Activated CD4-positive, alpha-beta T cell treated with anti-CD3 and anti-CD28 coated beads, Interleukin-2, amount 10 ng/mL, durations not matched to agents 7 days and 5 days (primary cell): ENCODE measurements at regions of chr10 and their contacts with region 1.

Region 1: GRCh38 chr10:97196223-97197029 is 10.7 kb upstream of the SLIT1 start:
- DNase-seq: peak; percentile 71
- H3K4me3 Mint-ChIP-seq: peak overlapping the region; percentile 71
- H3K27ac Mint-ChIP-seq: no peak overlapping the region
- H3K4me1 Mint-ChIP-seq: peaks cover 22% of the 10 kb centered on the region
- H3K27me3 Mint-ChIP-seq: peaks cover 44% of the 10 kb centered on the region

Region 2: DNA sequence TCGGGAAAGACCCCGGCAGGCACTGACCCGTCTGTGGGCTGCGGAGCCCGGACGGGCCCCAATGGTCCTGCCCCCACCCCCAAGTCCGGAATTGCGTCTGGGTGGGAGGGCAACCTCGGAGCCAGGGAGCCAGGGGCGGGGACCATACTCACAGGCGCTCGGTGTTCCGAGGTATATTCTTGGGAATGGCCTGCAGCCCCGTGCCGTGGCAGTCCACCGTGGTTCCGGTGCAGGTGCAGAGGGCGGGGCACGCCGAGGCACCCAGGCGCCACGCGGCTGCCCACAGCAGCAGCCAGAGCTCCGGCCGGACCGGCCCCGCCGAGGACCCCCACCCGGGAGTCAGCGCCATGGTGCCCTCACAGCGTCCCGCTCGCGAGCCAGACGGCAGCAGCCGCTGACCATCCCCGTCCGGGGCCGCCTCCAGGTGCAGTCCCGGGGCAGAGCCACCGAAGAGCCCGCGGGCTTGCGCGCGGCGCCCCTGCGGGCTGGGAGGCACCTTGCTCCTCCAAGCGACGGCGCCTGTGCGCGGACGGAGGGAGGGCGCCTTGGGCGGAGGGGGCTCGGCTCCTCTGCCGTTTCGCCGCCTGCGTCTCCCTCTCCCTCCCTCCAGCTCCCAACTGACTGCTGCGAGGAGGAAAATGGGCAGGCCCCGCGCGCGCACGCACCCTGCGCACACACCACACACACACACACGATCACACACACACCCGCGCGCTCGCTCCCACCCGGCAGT is 10.9 kb before region 1 on chr10 and contains the start of gene SLIT1:
- CTCF ChIA-PET with region 1: interaction called, 10 read pairs
- POLR2A ChIA-PET with region 1: no interaction called
- DNase-seq: no peak
- H3K4me3 Mint-ChIP-seq: no peak within 1 kb of the TSS
- H3K27ac Mint-ChIP-seq: no peak within 1 kb of the TSS
- H3K4me1 Mint-ChIP-seq: peaks cover 5% of the 10 kb centered on the region
- H3K27me3 Mint-ChIP-seq: peaks cover 49% of the 10 kb centered on the region
- total RNA-seq, gene SLIT1: 1.2 to 1.6 TPM

Region 3: GRCh38 chr10:97292097-97292862 is 95.9 kb after region 1 on chr10 and contains the start of gene ARHGAP19:
- CTCF ChIA-PET with region 1: no interaction called
- POLR2A ChIA-PET with region 1: no interaction called
- DNase-seq: peak; percentile 98
- H3K4me3 Mint-ChIP-seq: peak within 1 kb of the TSS; percentile 82
- H3K27ac Mint-ChIP-seq: peak within 1 kb of the TSS; percentile 93
- H3K4me1 Mint-ChIP-seq: peaks cover 22% of the 10 kb centered on the region
- H3K27me3 Mint-ChIP-seq: no peaks in the 10 kb centered on the region
- total RNA-seq, gene ARHGAP19: 56.6 to 58.5 TPM